ENCODE measurements at regions of chr14 and their contacts with region 1.

Region 1: GRCh38 chr14:102316743-102317563 is 2.6 kb upstream of the ZNF839 start:
- DNase-seq: peak; percentile 99
- H3K4me3 Mint-ChIP-seq: peak overlapping the region; percentile 99
- H3K27ac Mint-ChIP-seq: peak overlapping the region; percentile 97
- H3K4me1 Mint-ChIP-seq: peaks cover 54% of the 10 kb centered on the region
- H3K27me3 Mint-ChIP-seq: peaks cover 2% of the 10 kb centered on the region

Region 2: DNA sequence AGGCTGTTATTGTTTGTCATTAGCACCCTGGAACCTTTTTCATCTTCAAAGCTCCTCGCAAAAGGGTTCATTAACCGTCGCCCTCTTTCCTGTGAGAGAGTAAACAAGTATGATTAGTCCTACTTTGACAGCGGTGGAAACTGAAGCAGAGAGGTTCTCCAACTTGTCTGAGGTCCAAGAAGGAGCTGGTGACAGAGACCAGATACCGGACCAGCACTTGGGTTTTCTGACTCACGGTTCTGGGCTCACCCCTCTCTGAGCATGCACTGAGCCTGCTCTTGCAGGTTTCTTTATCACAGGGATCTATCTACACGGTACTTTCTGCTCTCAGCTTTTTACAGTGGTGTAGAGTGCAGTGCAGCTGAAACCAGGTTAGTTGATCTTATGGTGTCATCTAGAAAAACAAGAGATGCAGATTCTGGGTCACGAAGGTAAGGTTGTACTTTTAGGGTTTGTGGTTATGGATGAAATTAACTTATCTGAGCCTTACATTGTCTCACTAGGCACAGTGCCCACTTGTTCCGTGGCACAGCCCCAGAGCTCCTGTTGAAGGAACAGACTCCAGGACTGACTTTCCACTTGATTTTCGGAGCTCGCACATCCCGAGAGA is 493.3 kb before region 1 on chr14:
- intact Hi-C with region 1: loop called (anchors 5 kb)
- DNase-seq: peak; percentile 93
- H3K4me3 Mint-ChIP-seq: peak overlapping the region; percentile 81
- H3K27ac Mint-ChIP-seq: peak overlapping the region; percentile 96
- H3K4me1 Mint-ChIP-seq: peaks cover 76% of the 10 kb centered on the region
- H3K27me3 Mint-ChIP-seq: no peaks in the 10 kb centered on the region

Region 3: DNA sequence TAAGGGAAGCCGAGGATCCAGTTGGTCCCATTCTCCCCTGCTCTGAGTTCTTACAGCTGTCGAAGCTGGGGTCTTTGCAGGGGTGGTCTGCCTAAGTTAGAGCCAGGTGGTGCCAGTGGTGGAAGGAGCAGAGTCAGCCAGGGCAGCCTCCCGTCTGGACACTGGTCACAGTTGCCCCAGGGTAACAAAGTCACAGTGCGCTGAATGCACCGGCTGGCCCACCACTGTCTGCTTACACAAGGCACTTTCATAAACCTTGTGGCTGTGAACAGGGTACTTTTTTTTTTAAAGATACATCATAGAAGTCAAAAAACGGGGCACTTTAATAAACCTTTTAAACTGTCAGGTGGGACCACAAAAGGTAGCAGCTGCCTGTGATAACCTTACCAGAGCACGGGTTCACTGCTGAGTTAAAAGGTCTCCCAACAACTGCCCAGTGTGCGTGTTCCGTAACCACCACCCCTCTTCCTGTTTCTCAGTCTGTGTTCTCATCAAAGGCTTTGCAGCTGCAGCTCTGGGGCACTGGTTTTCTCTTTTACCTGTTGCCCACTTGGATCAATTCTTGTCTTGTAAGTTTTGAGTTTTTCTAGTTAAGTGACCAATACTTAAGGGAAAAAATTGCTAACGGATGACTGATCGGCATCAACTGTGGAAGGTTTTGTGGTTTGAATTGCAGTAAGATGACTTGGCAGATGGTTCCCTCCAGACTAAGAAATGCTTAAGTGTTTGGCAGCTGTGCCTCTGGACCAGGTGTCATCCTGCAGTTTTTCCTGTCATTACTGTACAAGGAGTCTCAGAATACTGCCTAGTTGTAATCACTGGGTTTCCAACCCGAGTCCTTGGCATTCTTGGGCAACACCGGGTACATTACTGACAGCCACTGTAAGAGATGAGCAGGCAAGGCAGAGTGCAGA is 296.6 kb before region 1 on chr14:
- intact Hi-C with region 1: loop called (anchors 2 kb)
- DNase-seq: peak; percentile 85
- H3K4me3 Mint-ChIP-seq: peak overlapping the region; percentile 54
- H3K27ac Mint-ChIP-seq: peak overlapping the region; percentile 88
- H3K4me1 Mint-ChIP-seq: peaks cover 22% of the 10 kb centered on the region
- H3K27me3 Mint-ChIP-seq: no peaks in the 10 kb centered on the region

Region 4: DNA sequence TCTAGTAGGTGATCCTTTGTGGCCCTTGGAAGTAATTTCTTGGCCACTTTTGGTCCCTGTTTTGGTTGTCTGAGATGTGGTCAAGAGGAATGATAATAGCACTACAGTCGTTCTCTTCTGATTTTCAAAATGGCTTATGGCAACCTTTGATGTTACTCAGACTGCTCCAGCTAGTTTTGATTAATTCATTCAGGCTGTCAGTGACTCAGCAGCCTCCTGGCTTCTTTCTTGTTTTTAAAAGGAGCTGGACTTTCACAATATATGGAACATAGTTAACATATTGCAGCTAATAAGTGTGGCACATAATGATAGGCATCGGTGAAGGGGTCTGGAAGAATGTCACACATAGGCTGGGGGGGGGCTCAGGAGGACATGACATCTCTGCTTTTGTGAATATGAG is 129.9 kb before region 1 on chr14:
- intact Hi-C with region 1: loop called (anchors 5 kb)
- DNase-seq: no peak
- H3K4me3 Mint-ChIP-seq: no peak overlapping the region
- H3K27ac Mint-ChIP-seq: peak overlapping the region; percentile 38
- H3K4me1 Mint-ChIP-seq: peaks cover 27% of the 10 kb centered on the region
- H3K27me3 Mint-ChIP-seq: no peaks in the 10 kb centered on the region

Region 5: DNA sequence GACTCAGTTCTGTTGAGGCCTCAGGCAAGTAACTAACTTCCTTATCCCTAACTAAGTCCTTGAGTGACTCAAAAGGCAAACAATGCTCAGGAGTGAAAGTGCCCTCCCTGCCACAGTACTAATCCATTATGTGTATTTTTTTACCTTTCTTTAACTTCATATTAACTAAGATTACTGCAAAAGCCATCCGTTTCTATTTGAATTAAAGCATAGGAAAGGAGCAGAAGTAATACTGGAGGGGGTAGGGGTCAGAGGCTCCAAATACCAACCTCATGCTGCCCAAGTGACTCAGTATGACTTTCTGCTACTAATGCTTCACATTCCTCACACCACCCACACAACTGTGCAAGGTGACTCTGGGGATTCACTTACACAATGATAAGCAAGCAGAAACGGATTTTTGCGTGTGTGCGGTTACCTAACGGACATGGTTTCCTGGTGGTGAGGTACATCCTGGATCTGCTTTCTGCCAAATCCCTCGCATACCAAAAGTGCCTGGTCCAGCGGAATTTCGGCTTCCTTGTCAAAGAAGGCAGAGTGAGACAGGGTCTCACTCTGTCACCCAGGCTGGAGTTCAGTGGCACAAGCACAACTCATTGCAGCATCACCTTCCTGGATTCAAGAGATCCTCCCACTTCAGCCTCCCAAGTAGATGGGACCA is 37.1 kb before region 1 on chr14:
- intact Hi-C with region 1: no loop called
- DNase-seq: no peak
- H3K4me3 Mint-ChIP-seq: no peak overlapping the region
- H3K27ac Mint-ChIP-seq: no peak overlapping the region
- H3K4me1 Mint-ChIP-seq: no peaks in the 10 kb centered on the region
- H3K27me3 Mint-ChIP-seq: no peaks in the 10 kb centered on the region

Region 6: DNA sequence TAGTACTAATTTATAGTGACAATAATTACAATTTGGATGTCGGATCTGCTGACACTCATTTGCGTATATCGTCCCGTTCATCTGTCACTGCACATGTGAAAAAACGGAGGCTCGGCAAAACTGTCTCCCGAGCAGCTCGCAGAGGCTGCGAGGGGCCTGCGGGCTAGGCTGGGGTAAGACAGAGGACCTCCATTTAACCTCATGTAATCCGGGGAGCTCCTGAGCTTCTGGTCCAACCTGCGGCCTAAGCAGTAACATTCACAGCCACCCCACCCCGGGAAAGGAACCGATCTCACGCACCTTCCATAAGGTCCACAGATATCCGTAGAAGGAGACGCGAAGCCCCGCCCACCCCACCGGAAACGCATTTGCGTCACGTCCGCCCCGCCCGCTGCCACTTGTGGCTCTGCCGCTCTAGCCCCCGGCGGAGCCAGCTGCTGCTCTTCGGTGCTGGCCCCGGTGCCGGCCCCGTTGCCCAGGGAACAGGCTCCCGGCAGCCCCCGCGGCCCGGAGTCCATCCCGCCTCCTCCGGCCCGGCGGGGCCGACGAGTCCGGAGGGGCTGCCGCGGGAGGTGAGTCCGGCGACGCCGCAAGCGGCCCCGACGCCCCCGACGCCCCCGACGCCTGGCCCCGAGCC is 45.7 kb after region 1 on chr14 and contains the starts of genes CINP and TECPR2:
- intact Hi-C with region 1: loop called (anchors 1 kb)
- DNase-seq: peak; percentile 98
- H3K4me3 Mint-ChIP-seq: no peak within 1 kb of the TSS
- H3K27ac Mint-ChIP-seq: peak within 1 kb of the TSS; percentile 92
- H3K4me1 Mint-ChIP-seq: peaks cover 27% of the 10 kb centered on the region
- H3K27me3 Mint-ChIP-seq: peaks cover 2% of the 10 kb centered on the region
- total RNA-seq, gene CINP: 43.7 and 46.2 TPM in 2 replicates
- total RNA-seq, gene TECPR2: 6.4 and 7.4 TPM in 2 replicates

Region 7: DNA sequence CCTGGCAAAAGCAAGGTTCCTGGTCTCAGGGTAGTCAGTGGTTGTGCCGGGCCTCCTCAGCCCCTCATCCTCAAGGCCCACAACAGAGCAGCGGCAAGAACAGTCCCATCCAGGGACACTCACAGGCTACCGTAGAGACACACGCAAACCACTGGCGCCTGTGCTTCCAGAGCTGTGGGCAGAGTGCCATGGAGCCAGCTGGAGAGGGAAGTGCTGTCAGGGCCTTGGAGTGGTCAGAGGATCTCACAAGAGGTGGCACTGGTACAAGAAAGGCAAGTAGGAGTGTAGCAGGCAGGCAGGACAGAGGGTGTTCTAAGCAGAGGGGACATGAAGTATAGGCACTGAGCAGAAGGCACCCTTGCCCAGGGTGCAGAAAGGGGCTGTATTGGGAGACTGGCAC is 158.0 kb after region 1 on chr14:
- intact Hi-C with region 1: no loop called
- DNase-seq: no peak
- H3K4me3 Mint-ChIP-seq: no peak overlapping the region
- H3K27ac Mint-ChIP-seq: no peak overlapping the region
- H3K4me1 Mint-ChIP-seq: peaks cover 20% of the 10 kb centered on the region
- H3K27me3 Mint-ChIP-seq: no peaks in the 10 kb centered on the region

Region 8: DNA sequence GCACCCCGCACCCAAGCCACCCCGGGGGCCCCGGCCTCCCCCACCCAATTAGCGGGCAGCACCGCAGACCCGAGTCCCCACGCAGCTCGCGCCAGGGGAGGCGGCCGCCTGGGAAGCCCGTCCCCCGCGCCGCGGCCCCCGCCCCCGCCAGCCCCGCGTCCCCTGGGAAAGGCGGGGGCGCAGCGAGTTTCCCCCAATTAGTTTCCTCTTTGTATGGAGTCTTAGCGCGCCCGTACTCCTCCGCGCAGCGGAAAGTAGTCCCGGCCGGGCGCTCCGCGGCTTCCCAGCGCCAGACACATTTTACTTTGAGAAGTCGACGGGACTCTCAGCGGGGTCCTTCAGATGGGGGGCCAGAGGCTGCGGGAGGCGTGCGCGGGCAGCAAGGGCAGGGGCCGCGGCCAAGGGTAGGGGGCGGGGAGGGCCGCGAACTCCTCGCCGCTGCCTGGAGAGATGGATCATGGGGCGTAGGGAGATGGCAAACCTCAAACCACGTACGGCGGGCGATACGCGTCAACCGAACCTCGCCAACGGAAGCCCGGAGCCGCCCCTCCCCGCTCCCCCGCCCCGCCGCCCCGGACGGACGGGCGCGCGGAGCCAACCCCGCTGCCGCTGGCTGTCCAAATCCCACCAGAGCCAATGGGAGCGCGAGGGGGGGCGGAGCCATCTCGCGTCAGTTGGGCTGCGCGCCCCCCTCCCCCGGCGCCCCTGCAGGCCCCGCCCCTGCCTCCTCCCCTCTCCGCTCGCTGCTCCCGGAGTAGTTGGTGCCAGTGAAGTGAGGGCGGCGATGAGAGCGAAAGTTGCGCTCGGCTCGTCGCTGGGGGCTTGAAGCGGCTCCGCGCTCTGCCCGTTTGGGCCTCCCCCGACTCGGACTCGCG is 275.2 kb after region 1 on chr14 and contains the start of gene RCOR1:
- intact Hi-C with region 1: loop called (anchors 5 kb)
- DNase-seq: peak; percentile 99
- H3K4me3 Mint-ChIP-seq: peak within 1 kb of the TSS; percentile 94
- H3K27ac Mint-ChIP-seq: peak within 1 kb of the TSS; percentile 95
- H3K4me1 Mint-ChIP-seq: peaks cover 23% of the 10 kb centered on the region
- H3K27me3 Mint-ChIP-seq: peaks cover 4% of the 10 kb centered on the region
- total RNA-seq, gene RCOR1: 21.8 and 24.0 TPM in 2 replicates

Measured in activated CD4-positive, alpha-beta T cell treated with anti-CD3 and anti-CD28 coated beads, Interleukin-2, amount 10 ng/mL, durations not matched to agents 24 days and 14 days (primary cell).